GM12878 (cell line): ENCODE measurements at regions of chr6 and their contacts with region 1.

Region 1: DNA sequence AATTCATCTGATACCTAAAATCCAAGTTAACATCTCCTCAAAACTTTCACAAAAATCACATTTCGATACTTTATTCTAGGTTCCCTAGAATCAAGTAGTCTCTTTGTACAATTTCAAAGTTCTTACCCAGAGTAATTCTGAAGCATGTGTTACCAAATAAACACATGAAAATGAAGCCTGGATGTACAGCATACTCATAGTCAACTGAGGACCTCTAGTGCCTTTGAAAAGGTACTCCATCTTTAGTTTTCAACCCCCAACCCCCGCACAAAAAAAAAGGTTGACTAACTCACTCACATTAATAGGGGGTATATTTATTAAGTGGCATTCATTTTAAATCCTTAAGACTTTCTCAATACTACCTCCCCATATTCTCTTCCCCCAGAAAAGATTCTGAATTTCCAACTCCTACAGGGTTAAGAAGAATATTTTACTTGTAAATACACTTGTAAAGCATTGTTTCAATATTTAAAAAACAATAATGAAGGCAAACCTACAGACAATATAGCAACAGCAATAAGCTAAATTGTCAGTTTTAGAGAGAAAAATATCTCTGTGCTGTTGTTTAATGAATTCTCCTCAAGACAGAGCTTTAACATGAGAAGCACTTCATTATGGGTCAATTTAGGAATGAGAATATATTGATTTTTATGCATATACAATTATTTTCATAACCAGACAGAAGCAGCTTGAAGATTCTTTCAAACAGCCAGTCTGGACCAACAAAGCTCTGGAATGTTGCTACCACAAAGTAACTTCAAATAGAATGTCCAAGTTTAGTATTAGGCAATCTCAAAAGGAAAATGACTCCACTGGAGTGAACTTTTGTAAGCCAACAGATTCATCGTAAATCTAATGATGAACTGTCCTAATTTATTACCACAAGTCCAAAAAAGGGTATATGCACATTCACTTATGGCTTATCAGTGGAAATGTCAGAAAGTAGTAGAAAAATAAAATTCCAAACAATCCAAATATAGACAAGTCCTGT is 3.3 kb downstream of the PLN start:
- DNase-seq: no peak
- ATAC-seq: peak; percentile 93
- H3K4me3 ChIP-seq: no peak overlapping the region
- H3K27ac ChIP-seq: no peak overlapping the region
- H3K4me1 ChIP-seq: no peaks in the 10 kb centered on the region
- H3K27me3 ChIP-seq: no peaks in the 10 kb centered on the region
- CTCF ChIP-seq: peak; percentile 49 to 72 (median 52); a peak in 5 of 6 replicates
- EP300 ChIP-seq: no peak
- POLR2A ChIP-seq: no peak
- RAD21 ChIP-seq: peak; percentile 85

Region 2: DNA sequence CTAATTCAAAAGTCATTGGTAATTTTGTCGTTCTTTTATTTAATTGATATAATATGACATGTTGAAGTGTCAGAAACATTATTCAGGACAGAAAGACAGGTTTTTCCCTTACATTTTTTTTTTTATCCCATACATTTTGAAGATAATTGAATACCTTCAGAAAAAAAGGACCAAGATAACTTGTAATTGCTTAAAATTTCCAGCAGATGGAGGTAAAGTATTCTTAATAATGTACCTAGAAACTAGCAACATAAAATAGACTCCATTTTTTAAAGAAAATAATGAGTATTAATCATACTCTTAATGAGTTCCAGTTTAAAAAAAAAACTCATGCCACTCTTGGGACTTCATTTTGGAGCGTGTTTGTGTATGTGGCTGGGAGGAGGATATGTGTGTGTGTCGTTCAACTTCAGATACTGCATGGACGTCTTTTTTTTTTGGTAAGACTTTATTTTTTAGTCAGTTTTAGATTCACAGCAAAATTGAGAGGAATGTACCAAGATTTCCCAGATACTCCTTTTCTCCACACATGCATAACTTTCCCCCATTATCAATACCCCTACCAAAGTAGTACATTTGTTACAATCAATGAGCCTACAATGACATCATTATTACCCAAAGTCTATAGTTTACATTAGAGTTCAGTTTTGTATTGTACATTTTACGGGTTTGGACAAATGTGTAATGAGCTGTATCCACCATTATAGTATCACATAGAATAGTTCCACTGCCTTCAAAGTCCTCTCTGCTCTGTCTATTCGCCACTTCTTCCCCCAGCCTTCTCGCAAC is 1205.0 kb before region 1 on chr6:
- CTCF ChIA-PET with region 1: no interaction called
- POLR2A ChIA-PET with region 1: no interaction called
- RAD21 ChIA-PET with region 1: no interaction called
- SMC1A ChIA-PET with region 1: no interaction called
- in situ Hi-C with region 1: no loop called
- intact Hi-C with region 1: loop called (anchors 10 kb)
- DNase-seq: no peak
- ATAC-seq: peak; percentile 63
- H3K4me3 ChIP-seq: no peak overlapping the region
- H3K27ac ChIP-seq: no peak overlapping the region
- H3K4me1 ChIP-seq: no peaks in the 10 kb centered on the region
- H3K27me3 ChIP-seq: no peaks in the 10 kb centered on the region; a peak in 1 of 4 replicates
- CTCF ChIP-seq: peak in 2 of 3 experiments; percentile 29 to 35; a peak in 3 of 6 replicates
- EP300 ChIP-seq: no peak
- POLR2A ChIP-seq: no peak
- RAD21 ChIP-seq: 0 out of 2 replicates have a peak, but pooled peaks have one; percentile 14

Region 3: GRCh38 chr6:117840541-117840983 is 710.8 kb before region 1 on chr6:
- CTCF ChIA-PET with region 1: no interaction called
- POLR2A ChIA-PET with region 1: no interaction called
- RAD21 ChIA-PET with region 1: no interaction called
- SMC1A ChIA-PET with region 1: no interaction called
- in situ Hi-C with region 1: no loop called
- intact Hi-C with region 1: loop called (anchors 2 kb)
- DNase-seq: no peak
- ATAC-seq: peak; percentile 70
- H3K4me3 ChIP-seq: no peak overlapping the region
- H3K27ac ChIP-seq: no peak overlapping the region
- H3K4me1 ChIP-seq: no peaks in the 10 kb centered on the region
- H3K27me3 ChIP-seq: no peaks in the 10 kb centered on the region
- CTCF ChIP-seq: peak; percentile 37 to 49 (median 41); a peak in 3 of 6 replicates
- EP300 ChIP-seq: no peak
- POLR2A ChIP-seq: no peak
- RAD21 ChIP-seq: peak; percentile 65